AG04449 (cell line): ENCODE measurements at regions of chr16 and their contacts with region 1.

Region 1: DNA sequence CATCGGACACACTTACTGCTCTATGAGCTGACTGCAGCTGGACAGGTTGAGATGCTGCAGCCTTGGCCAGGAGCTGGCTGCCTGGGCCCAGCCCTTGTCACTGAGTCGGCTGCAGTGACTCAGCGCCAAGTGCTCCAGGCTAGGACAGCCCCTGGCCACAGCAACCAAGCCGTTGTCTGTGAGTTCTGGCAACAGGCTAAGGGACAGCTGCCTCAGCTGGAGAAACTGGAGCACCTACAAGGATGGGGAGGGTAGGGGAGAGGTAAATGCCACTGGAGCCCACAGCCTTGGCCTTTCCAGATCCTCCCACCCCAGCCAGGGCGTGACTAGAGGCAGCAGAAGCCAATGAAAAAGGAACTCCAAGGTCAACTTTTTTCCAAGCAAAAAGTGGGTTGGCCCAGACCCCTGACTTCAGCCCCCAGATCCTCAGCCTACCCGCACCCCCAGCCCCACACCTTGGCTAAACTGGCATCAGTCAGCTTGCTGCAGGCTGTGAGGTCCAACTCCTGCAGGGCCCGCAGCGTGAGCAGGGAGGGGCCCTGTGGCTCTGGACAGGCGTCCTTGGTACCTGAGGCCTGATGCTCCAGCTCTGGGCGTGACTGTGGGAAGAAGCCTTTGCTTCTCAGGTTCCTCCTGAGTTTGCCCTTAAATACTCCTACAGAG is 9.1 kb downstream of the ELMO3 start:
- DNase-seq: no peak
- H3K4me3 ChIP-seq: no peak overlapping the region
- CTCF ChIP-seq: no peak

Region 2: GRCh38 chr16:67000384-67001351 is 207.3 kb before region 1 on chr16:
- CTCF ChIA-PET with region 1: no interaction called
- POLR2A ChIA-PET with region 1: no interaction called
- DNase-seq: no peak
- H3K4me3 ChIP-seq: peak overlapping the region; percentile 60
- CTCF ChIP-seq: no peak

Region 3: GRCh38 chr16:67191995-67192681 is 15.8 kb before region 1 on chr16 and contains the start of gene E2F4:
- CTCF ChIA-PET with region 1: interaction called, 83 read pairs
- POLR2A ChIA-PET with region 1: interaction called, 7 read pairs
- DNase-seq: peak; percentile 40
- H3K4me3 ChIP-seq: peak within 1 kb of the TSS; percentile 97
- CTCF ChIP-seq: no peak